Activated CD4-positive, alpha-beta T cell treated with anti-CD3 and anti-CD28 coated beads, Interleukin-2, amount 10 ng/mL, durations not matched to agents 24 days and 14 days (primary cell): ENCODE measurements at regions of chr1 and their contacts with region 1.

Region 1: DNA sequence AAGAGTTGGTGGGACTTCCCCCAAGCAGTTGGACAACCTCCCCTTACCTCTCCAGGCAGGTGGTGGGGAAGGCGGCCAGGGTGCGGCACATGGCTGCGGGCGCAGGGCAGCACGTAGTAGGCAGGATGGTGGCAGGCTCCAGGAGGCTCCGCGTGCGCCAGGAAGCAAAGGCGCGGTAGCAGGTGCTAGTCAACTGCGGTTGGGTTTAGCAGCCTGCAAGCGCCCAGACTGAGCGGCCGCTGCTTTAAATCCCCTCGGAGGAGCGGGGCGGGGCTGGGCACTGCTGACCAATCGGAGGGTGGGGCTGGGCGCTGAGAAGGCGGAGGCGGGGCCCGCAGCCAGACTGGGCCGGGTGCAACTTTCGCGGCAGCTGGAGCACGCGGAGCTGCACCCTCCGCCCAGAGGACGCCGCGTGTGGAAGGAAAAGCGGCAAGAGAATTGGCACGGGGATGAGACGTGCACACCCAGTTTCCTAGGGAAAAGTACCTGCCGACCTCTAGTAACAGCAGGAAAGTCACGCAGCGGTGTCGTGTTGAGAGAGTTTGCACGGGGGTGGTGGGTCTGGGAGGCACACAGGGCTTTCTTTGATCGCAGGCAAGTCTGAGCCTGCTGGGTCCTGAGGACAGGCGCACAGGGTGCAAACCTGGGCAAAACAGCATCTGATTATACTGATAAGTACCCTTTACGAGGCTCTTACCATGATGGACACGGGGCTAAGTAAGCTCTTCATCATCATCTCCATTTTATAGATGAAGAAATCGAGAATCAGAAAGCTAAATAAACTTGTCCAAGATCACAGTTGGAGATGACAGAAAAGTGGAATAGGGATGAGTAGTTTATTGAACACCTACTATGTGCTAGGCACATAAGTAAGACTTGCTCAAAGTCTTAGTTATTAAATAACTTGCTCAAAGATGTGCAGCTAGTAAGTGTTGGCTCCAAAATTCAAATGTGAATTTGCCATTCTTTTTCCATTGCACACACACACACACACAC is at the start of gene RGS16:
- DNase-seq: peak; percentile 98
- H3K4me3 Mint-ChIP-seq: no peak within 1 kb of the TSS
- H3K27ac Mint-ChIP-seq: no peak within 1 kb of the TSS
- H3K4me1 Mint-ChIP-seq: peaks cover 45% of the 10 kb centered on the region
- H3K27me3 Mint-ChIP-seq: peaks cover 2% of the 10 kb centered on the region
- total RNA-seq, gene RGS16: 94.3 and 94.7 TPM in 2 replicates

Region 2: GRCh38 chr1:182629499-182630096 is 25.1 kb after region 1 on chr1:
- intact Hi-C with region 1: loop called (anchors 1 kb)
- DNase-seq: peak; percentile 76
- H3K4me3 Mint-ChIP-seq: peak overlapping the region; percentile 47
- H3K27ac Mint-ChIP-seq: peak overlapping the region; percentile 80
- H3K4me1 Mint-ChIP-seq: peaks cover 65% of the 10 kb centered on the region
- H3K27me3 Mint-ChIP-seq: peaks cover 21% of the 10 kb centered on the region

Region 3: DNA sequence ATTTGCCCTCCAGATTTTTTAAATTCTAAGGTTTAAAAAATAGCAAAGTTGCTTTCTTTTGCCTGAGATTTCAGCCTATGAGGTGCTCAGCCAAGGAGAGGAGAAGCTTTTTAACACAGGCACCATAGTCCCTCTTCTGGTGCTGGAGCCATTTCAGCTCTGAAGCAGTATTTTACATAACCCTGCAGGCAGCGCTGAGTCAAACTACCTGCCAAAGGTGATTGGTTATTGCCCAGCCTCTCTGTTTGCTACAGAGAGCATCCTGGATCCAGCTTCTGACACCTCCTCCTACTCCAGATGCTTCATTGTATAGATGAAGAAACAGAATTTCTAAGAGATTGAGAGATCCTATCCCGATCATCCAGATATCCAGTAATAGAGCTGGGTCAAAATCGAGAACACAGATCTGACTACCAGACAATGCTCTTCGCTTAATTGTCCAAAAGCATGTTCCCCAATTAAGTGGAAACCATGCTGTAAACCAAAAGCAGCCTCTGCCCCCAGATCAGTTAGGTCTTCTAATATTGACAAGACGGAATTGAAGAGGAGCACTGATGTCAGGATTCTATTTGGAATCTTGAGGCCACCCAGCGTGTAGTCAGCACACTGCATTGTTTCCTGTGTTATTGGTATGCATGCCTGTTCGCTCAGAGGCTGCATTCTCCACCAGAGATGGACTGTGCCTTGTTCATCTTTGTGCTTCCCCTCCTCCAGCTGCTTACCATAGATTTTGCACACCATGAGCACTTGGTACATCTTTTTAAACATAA is 57.8 kb after region 1 on chr1:
- intact Hi-C with region 1: loop called (anchors 5 kb)
- DNase-seq: no peak
- H3K4me3 Mint-ChIP-seq: no peak overlapping the region
- H3K27ac Mint-ChIP-seq: no peak overlapping the region
- H3K4me1 Mint-ChIP-seq: no peaks in the 10 kb centered on the region
- H3K27me3 Mint-ChIP-seq: peaks cover 36% of the 10 kb centered on the region

Region 4: GRCh38 chr1:182709225-182709771 is 104.8 kb after region 1 on chr1:
- intact Hi-C with region 1: loop called (anchors 1 kb)
- DNase-seq: no peak
- H3K4me3 Mint-ChIP-seq: peak overlapping the region; percentile 43
- H3K27ac Mint-ChIP-seq: peak overlapping the region; percentile 74
- H3K4me1 Mint-ChIP-seq: peaks cover 30% of the 10 kb centered on the region
- H3K27me3 Mint-ChIP-seq: no peaks in the 10 kb centered on the region

Region 5: DNA sequence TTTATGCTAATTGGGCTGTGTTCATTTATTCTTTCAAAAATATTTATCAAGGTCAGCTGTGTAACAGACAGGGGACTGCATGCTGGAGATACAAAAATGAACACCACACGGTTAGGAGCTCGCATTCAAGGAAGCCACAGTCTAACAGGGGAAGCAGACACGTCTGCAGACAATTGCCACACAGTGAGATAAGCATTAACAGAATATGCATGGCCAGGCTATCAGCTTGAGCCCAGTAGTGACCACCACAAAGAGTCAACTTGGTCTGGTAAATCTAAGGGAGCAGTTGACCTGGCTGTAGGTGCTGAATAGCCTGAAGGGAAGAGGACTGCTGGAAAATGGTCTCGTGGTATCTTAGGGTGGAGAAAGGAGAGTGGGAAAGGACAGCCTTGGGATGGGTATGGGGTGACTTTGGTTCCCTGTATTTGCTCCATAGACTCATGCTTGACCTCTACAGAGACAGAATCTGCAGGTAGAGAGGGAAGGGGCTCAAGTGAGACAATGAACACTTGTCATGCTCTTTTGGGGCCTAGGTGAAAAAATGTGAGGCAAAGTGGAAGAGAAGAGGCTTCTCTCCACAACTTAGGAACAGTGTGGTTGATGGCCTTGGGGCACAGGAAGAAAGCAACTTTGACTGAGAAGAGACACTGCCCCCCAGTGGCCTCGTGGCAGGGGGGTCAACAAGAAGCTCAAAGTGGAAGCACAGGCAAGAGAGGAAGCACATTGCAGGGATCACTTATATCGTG is 177.5 kb after region 1 on chr1:
- intact Hi-C with region 1: loop called (anchors 1 kb)
- DNase-seq: peak; percentile 91
- H3K4me3 Mint-ChIP-seq: no peak overlapping the region
- H3K27ac Mint-ChIP-seq: no peak overlapping the region
- H3K4me1 Mint-ChIP-seq: peaks cover 21% of the 10 kb centered on the region
- H3K27me3 Mint-ChIP-seq: peaks cover 3% of the 10 kb centered on the region

Region 6: DNA sequence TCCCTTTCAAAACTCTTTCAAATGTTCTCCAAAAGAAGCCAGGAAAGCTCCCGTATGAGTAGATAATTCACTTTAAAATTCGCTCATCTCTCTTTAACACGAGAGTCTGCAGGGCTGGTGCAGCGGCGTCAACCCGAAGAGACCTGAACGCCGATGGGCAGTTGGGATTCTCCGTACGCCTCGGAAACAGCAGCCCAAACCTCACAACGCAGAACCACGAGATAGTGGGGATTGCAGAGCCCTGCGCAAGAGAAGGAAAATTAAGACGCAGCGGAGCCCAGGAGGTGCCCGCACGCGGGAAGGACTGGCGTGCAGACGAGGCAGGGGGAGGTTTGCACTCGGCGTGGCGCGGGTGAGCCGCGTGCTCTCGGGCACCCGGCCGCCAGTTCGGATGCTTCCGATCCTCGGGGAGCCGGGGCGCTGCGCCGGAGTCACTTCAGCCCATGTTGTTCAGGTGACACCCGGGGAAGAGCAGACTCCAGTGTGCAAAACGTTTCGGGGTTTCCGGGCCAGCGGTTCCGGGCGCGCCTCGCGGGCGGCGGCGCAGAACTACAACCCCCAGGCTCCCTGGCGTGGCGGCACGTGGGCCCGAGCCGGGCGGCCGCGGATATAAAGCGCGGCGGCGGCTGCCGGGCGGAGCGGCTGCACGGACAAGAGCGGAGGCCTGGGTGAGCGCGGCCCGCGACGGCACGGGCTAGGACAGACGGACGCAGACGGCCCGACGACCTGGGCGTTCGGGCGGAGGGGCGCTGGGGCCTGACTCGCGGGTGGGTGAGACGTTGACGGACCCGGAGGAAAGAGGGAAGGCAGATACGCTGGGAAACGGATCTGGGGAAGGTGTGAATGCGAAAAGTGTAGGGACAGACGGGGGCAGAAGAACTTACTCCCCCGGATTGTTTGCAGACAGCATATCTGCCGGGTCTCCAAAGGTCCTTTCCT is 184.9 kb after region 1 on chr1 and contains the start of gene NPL:
- intact Hi-C with region 1: loop called (anchors 1 kb)
- DNase-seq: peak; percentile 96
- H3K4me3 Mint-ChIP-seq: peak within 1 kb of the TSS; percentile 89
- H3K27ac Mint-ChIP-seq: peak within 1 kb of the TSS; percentile 83
- H3K4me1 Mint-ChIP-seq: peaks cover 10% of the 10 kb centered on the region
- H3K27me3 Mint-ChIP-seq: peaks cover 18% of the 10 kb centered on the region
- total RNA-seq, gene NPL: 4.4 and 5.5 TPM in 2 replicates

Region 7: GRCh38 chr1:182839209-182840065 is 235.0 kb after region 1 on chr1 and contains the start of gene DHX9:
- intact Hi-C with region 1: loop called (anchors 1 kb)
- DNase-seq: peak; percentile 99
- H3K4me3 Mint-ChIP-seq: peak within 1 kb of the TSS; percentile 92
- H3K27ac Mint-ChIP-seq: peak within 1 kb of the TSS; percentile 94
- H3K4me1 Mint-ChIP-seq: peaks cover 37% of the 10 kb centered on the region
- H3K27me3 Mint-ChIP-seq: peaks cover 3% of the 10 kb centered on the region
- total RNA-seq, gene DHX9: 344 and 355 TPM in 2 replicates